CD8-positive, alpha-beta memory T cell (primary cell): ENCODE measurements at regions of chr14 and their contacts with region 1.

Region 1: GRCh38 chr14:50321009-50321660 is 9.0 kb downstream of the DMAC2L start:
- DNase-seq: peak; percentile 32 to 83 (median 69)
- H3K4me3 ChIP-seq: peak overlapping the region; percentile 23
- H3K4me3 Mint-ChIP-seq: no peak overlapping the region
- H3K27ac ChIP-seq: peak overlapping the region; percentile 52
- H3K27ac Mint-ChIP-seq: no peak overlapping the region
- H3K4me1 ChIP-seq: peaks cover 9% of the 10 kb centered on the region
- H3K4me1 Mint-ChIP-seq: peaks cover 5 to 35% (median 22%) of the 10 kb centered on the region in 3 donors
- H3K27me3 ChIP-seq: no peaks in the 10 kb centered on the region
- H3K27me3 Mint-ChIP-seq: peaks cover 0 to 2% of the 10 kb centered on the region in 2 donors

Region 2: GRCh38 chr14:50333006-50333509 is 11.9 kb after region 1 on chr14:
- CTCF ChIA-PET with region 1: interaction called, 27 read pairs
- POLR2A ChIA-PET with region 1: no interaction called
- DNase-seq: no peak
- H3K4me3 ChIP-seq: no peak overlapping the region
- H3K4me3 Mint-ChIP-seq: no peak overlapping the region
- H3K27ac ChIP-seq: no peak overlapping the region
- H3K27ac Mint-ChIP-seq: peak overlapping the region in 4 of 8 donors; percentile 2 to 85 (median 20)
- H3K4me1 ChIP-seq: peaks cover 11% of the 10 kb centered on the region
- H3K4me1 Mint-ChIP-seq: peaks cover 15 to 23% (median 16%) of the 10 kb centered on the region in 3 donors
- H3K27me3 ChIP-seq: no peaks in the 10 kb centered on the region
- H3K27me3 Mint-ChIP-seq: no peaks in the 10 kb centered on the region

Region 3: DNA sequence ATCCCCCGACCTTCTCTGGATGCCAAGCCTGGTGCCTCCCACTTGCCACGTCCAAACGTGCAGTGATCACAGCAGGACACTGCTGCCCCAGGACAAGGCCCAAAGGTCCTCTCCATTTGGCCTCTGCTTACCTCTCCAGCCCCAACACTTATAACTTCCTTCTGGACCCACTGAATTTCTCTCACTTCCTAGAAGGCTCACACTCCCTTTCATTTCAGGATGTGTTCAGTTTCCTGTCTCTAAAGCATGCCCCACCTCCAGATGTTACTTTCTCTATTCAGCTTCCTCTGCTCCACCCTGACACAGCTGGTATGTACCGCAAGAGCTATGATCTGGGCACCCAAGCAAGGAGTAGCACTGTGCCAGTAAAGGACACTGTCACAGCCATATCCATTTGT is 42.6 kb after region 1 on chr14:
- CTCF ChIA-PET with region 1: interaction called, 18 read pairs
- POLR2A ChIA-PET with region 1: interaction called, 3 read pairs
- DNase-seq: peak; percentile 26 to 71 (median 50)
- H3K4me3 ChIP-seq: peak overlapping the region; percentile 94
- H3K4me3 Mint-ChIP-seq: peak overlapping the region; percentile 86 to 95 (median 90)
- H3K27ac ChIP-seq: peak overlapping the region; percentile 81
- H3K27ac Mint-ChIP-seq: peak overlapping the region; percentile 84 to 97 (median 96)
- H3K4me1 ChIP-seq: peaks cover 19% of the 10 kb centered on the region
- H3K4me1 Mint-ChIP-seq: peaks cover 41 to 61% (median 58%) of the 10 kb centered on the region in 3 donors
- H3K27me3 ChIP-seq: no peaks in the 10 kb centered on the region
- H3K27me3 Mint-ChIP-seq: no peaks in the 10 kb centered on the region

Region 4: GRCh38 chr14:50383618-50384225 is 62.6 kb after region 1 on chr14:
- CTCF ChIA-PET with region 1: no interaction called
- POLR2A ChIA-PET with region 1: no interaction called
- DNase-seq: no peak
- H3K4me3 ChIP-seq: no peak overlapping the region
- H3K4me3 Mint-ChIP-seq: no peak overlapping the region
- H3K27ac ChIP-seq: no peak overlapping the region
- H3K27ac Mint-ChIP-seq: no peak overlapping the region
- H3K4me1 ChIP-seq: no peaks in the 10 kb centered on the region
- H3K4me1 Mint-ChIP-seq: no peaks in the 10 kb centered on the region
- H3K27me3 ChIP-seq: no peaks in the 10 kb centered on the region
- H3K27me3 Mint-ChIP-seq: no peaks in the 10 kb centered on the region

Region 5: DNA sequence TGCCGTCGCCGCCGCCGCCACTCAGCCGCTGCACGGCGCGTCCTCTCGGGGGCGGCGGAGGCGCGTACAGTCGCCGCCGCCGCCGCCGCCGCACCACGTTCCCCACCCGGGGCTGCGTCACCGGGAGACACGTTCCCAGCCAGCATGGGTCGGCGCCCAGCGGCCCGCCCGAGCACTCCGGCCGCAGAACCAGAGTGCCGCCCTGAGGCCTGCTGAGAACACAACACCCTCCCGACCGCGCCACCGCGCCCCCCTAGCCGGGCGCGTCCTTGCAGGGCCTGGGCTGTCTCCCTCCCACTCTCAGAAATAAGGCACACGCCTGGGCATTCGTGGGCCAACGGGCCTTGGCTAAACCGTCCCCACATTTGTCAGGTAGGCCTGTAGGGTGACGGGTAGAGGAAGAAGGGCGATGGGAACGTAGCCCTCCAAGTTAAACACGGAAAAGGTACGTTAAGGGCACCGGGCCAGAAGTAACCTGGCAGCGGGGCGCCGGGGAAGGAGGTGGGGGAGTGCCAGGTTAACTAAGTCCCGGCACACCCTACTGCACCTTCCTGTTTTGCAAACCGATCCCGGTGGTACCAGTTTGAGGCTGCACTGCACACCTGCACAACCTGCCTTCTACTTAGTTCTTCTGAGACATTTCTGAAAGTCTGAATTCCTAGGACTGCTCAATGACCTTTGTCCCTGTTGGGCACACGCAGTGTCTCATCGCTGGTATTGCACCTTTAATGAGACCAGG is 211.5 kb after region 1 on chr14 and contains the start of gene MAP4K5:
- CTCF ChIA-PET with region 1: interaction called, 12 read pairs
- POLR2A ChIA-PET with region 1: interaction called, 3 read pairs
- DNase-seq: peak; percentile 83 to 93 (median 87)
- H3K4me3 ChIP-seq: peak within 1 kb of the TSS; percentile 74
- H3K4me3 Mint-ChIP-seq: peak within 1 kb of the TSS; percentile 86 to 97 (median 91)
- H3K27ac ChIP-seq: peak within 1 kb of the TSS; percentile 66
- H3K27ac Mint-ChIP-seq: peak within 1 kb of the TSS; percentile 81 to 97 (median 90)
- H3K4me1 ChIP-seq: peaks cover 44% of the 10 kb centered on the region
- H3K4me1 Mint-ChIP-seq: peaks cover 45 to 51% (median 50%) of the 10 kb centered on the region in 3 donors
- H3K27me3 ChIP-seq: no peaks in the 10 kb centered on the region
- H3K27me3 Mint-ChIP-seq: no peaks in the 10 kb centered on the region
- total RNA-seq, gene MAP4K5: 35.2 to 36.4 TPM